ENCODE measurements at regions of chr7 and their contacts with region 1.

Region 1: DNA sequence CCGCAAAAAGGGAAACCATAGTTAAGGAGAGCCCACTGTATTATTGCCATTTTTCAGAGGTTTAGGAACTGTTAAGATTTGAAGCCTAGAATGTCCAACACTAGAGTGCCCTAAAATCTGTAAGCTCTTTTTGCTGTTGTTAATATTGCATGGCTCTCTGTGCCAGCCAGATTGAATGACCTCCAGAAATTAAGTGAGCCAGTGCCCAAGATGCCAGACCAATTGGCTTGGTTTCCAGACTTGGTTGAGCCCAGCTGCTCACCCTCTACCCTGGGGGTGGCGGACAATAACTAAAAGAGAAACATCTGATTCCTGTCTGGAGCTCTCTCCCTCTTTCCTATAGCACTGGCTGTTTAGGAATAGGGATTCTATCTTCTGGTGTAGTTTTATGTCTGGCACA is 340.1 kb downstream of the PHF14 start:
- DNase-seq: no peak

Region 2: DNA sequence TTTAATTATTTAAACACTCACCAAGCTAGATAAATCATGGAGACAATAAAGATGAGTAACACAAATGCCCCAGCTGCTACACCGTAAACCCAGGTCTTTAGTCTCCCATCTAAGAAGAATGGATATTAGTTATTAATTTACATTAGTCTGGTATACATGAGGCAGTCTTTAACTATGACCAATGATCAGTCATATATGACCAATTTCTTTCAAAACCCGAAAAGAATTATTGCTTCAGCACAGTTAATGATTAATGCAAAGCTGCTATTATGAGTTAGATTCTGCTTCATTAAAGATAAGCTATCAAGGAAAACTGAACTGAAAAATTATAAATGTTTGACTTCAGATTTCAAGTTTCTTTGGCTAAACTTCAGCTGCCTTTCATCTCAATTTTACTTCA is 62.7 kb after region 1 on chr7:
- intact Hi-C with region 1: loop called in 1 of 2 experiments (anchors 5 kb)
- DNase-seq: no peak

Region 3: GRCh38 chr7:11776039-11776438 is 462.2 kb after region 1 on chr7:
- intact Hi-C with region 1: no loop called
- DNase-seq: no peak

Measured in posterior vena cava (tissue), 2 donors.